Endothelial cell of umbilical vein (primary cell): ENCODE measurements at regions of chr20 and their contacts with region 1.

Region 1: GRCh38 chr20:16729565-16730456 is at the start of gene SNRPB2:
- DNase-seq: peak; percentile 94
- H3K4me3 ChIP-seq: peak within 1 kb of the TSS; percentile 78 to 94 (median 82)
- H3K27ac ChIP-seq: peak within 1 kb of the TSS; percentile 85
- H3K4me1 ChIP-seq: peaks cover 11% of the 10 kb centered on the region
- H3K27me3 ChIP-seq: peaks cover 3 to 8% of the 10 kb centered on the region in 2 experiments
- CTCF ChIP-seq: no peak
- POLR2A ChIP-seq: peak; percentile 90
- total RNA-seq, gene SNRPB2: 76.0 and 81.2 TPM in 2 replicates

Region 2: GRCh38 chr20:16273812-16274555 is 455.8 kb before region 1 on chr20:
- CTCF ChIA-PET with region 1: no interaction called
- POLR2A ChIA-PET with region 1: no interaction called
- dilution Hi-C with region 1: no loop called
- intact Hi-C with region 1: no loop called
- DNase-seq: no peak
- H3K4me3 ChIP-seq: no peak overlapping the region
- H3K27ac ChIP-seq: no peak overlapping the region
- H3K4me1 ChIP-seq: no peaks in the 10 kb centered on the region
- H3K27me3 ChIP-seq: no peaks in the 10 kb centered on the region
- CTCF ChIP-seq: no peak
- POLR2A ChIP-seq: no peak

Region 3: GRCh38 chr20:16573001-16573965 is 156.5 kb before region 1 on chr20 and contains the start of gene KIF16B:
- CTCF ChIA-PET with region 1: no interaction called
- POLR2A ChIA-PET with region 1: no interaction called
- dilution Hi-C with region 1: no loop called
- intact Hi-C with region 1: loop called (anchors 1 kb)
- DNase-seq: peak; percentile 93
- H3K4me3 ChIP-seq: peak within 1 kb of the TSS; percentile 73 to 80 (median 76)
- H3K27ac ChIP-seq: no peak within 1 kb of the TSS
- H3K4me1 ChIP-seq: peaks cover 17% of the 10 kb centered on the region
- H3K27me3 ChIP-seq: no peaks in the 10 kb centered on the region
- CTCF ChIP-seq: peak in 1 of 2 donors; percentile 3
- POLR2A ChIP-seq: no peak
- total RNA-seq, gene KIF16B: 5.1 and 8.8 TPM in 2 replicates